ENCODE measurements at regions of chr17 and their contacts with region 1.

Region 1: GRCh38 chr17:73156166-73156840 is 8.5 kb upstream of the SSTR2 start:
- H3K4me3 ChIP-seq: no peak overlapping the region
- H3K27ac ChIP-seq: peak overlapping the region; percentile 10; the same call in 1 of the 2 replicates
- H3K4me1 ChIP-seq: no peaks in the 10 kb centered on the region; the same call in 1 of the 2 replicates
- CTCF ChIP-seq: peak; percentile 78

Region 2: GRCh38 chr17:73138541-73139138 is 17.7 kb before region 1 on chr17:
- CTCF ChIA-PET with region 1: interaction called, 14 read pairs
- POLR2A ChIA-PET with region 1: no interaction called
- H3K4me3 ChIP-seq: no peak overlapping the region
- H3K27ac ChIP-seq: no peak overlapping the region
- H3K4me1 ChIP-seq: no peaks in the 10 kb centered on the region
- CTCF ChIP-seq: no peak

Region 3: DNA sequence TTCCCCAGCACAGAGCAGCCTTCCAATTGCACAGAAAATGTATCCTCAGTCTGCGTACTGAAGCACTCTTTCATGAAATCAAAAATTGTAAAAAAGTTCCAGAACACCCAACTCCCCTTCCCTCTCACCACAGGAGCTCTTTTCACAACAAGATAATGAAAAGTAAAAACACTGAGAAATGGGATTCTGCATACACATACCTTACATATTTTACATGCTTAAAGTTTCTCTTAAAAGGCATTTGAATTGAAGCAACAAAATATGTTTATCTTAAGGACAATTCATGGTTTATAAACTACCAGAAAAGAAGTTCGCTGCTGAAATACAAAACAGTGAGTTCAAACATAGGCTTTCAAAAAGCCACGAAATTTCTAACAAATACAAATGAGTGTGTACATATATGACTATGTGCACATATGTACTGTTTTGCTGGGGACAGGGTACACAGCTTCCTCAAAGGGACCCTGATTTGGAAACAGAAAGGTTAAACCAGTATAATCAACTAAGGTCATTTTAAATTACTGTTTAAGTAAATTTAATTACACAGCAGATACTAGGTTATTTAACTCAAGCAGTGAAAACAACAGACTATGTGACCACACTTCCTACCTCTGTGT is 70.4 kb after region 1 on chr17:
- CTCF ChIA-PET with region 1: no interaction called
- POLR2A ChIA-PET with region 1: no interaction called
- H3K4me3 ChIP-seq: no peak overlapping the region
- H3K27ac ChIP-seq: no peak overlapping the region
- H3K4me1 ChIP-seq: peaks cover 13% of the 10 kb centered on the region
- CTCF ChIP-seq: no peak